OCI-LY7 (cell line): ENCODE measurements at regions of chr21 and their contacts with region 1.

Region 1: GRCh38 chr21:32764186-32764585 is 7.4 kb downstream of the PAXBP1 start:
- DNase-seq: peak; percentile 13
- H3K4me3 ChIP-seq: no peak overlapping the region
- H3K27ac ChIP-seq: no peak overlapping the region
- H3K4me1 ChIP-seq: peaks cover 18% of the 10 kb centered on the region
- CTCF ChIP-seq: no peak

Region 2: DNA sequence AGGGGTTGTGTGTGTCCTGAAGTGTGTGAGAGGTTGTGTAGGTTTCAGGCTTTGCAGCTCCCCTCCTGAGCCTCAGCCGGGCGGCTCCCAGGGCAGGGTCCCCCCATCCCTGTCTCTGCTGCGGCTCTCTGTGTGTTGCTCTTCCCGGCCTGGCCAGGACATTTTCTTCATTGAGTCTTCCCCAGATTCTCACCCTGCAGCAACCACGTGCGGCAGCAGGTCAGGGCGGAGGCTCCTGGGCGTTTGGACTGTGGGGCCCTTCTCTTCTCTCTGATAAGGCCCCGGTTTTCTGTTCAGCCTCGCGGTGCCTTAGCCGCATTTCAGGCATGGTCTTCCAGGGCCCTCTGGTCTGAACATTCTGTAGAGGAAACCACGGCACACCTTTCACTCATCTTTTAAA is 177.1 kb before region 1 on chr21:
- CTCF ChIA-PET with region 1: no interaction called
- POLR2A ChIA-PET with region 1: no interaction called
- intact Hi-C with region 1: no loop called
- DNase-seq: no peak
- H3K4me3 ChIP-seq: no peak overlapping the region
- H3K27ac ChIP-seq: no peak overlapping the region
- H3K4me1 ChIP-seq: no peaks in the 10 kb centered on the region
- CTCF ChIP-seq: no peak

Region 3: DNA sequence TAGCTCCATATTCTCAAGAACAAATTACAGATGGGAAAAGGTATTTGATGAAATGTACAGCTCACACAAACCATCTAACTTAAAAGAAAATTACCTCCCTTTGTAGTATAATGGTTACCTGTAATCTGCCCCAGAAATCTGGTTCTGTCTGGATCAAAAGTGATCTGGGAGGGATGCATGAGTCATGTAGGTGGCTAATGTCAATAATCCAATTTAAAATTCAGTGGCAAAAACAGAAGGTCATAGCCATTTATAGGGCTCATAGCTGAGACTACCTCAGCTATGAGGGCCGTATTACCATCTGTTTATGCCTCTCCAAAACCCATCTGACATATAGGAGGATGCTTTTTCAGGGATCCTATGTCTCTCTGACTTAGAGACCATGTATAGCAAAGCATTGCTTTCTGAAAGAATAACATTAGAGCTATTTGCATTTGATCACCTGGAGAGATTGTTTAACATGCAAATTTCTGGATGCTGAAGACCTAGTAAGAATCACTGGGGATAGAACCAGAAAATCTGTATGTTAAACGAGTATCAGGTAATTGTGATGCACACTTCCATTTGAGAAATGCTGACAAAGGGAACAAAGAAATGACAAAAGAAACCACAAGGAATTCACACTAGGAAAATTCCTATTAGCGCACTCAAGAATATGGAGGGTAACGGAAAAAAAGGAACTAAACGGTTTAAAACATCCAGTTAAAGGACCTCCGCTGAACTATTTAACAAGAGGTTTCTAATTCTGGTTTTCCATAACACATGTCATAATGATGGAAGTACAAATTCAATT is 10.2 kb before region 1 on chr21:
- CTCF ChIA-PET with region 1: no interaction called
- POLR2A ChIA-PET with region 1: interaction called, 13 read pairs
- intact Hi-C with region 1: no loop called
- DNase-seq: no peak
- H3K4me3 ChIP-seq: no peak overlapping the region
- H3K27ac ChIP-seq: no peak overlapping the region
- H3K4me1 ChIP-seq: no peaks in the 10 kb centered on the region
- CTCF ChIP-seq: no peak

Region 4: DNA sequence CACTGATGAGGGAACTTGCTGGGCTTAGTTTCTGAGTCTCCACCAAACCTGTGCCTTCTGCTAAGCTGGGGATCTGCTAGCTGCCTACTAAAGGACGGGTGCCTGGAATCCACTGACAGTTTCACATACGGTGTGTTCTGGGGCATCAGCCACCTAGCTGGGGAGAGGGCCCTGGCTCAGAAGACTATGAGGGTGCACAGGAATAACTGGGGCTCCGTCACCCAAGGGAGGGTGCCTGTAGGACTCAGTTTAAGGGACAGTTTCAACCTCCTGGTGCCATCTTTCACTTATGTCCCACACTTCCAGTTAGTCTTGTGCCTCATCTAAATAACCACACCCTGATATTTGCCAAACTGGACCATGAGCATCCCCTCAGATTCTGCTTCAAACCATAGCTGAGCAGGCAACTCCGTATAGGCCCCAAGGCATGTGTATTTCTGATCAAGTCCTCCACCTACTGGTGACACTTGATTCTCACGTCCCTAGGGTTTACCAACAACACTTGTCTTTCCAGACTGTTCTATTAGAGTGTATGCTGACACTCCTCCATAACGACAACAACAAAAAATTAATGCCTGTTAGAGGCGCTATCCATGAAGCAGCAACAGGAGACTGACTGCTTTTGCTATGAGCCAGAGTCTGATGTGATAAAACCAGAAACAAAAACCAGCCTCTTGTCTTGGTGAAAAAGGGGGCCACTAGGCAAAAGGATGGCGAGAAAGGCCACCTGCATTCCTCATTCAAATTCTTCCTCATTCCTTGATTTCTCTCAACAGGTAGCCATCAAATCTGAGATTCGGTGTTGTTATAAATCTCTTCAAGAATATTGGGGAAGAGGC is 62.4 kb after region 1 on chr21:
- CTCF ChIA-PET with region 1: no interaction called
- POLR2A ChIA-PET with region 1: no interaction called
- intact Hi-C with region 1: no loop called
- DNase-seq: peak; percentile 45
- H3K4me3 ChIP-seq: no peak overlapping the region
- H3K27ac ChIP-seq: no peak overlapping the region
- H3K4me1 ChIP-seq: no peaks in the 10 kb centered on the region
- CTCF ChIP-seq: peak; percentile 68

Region 5: DNA sequence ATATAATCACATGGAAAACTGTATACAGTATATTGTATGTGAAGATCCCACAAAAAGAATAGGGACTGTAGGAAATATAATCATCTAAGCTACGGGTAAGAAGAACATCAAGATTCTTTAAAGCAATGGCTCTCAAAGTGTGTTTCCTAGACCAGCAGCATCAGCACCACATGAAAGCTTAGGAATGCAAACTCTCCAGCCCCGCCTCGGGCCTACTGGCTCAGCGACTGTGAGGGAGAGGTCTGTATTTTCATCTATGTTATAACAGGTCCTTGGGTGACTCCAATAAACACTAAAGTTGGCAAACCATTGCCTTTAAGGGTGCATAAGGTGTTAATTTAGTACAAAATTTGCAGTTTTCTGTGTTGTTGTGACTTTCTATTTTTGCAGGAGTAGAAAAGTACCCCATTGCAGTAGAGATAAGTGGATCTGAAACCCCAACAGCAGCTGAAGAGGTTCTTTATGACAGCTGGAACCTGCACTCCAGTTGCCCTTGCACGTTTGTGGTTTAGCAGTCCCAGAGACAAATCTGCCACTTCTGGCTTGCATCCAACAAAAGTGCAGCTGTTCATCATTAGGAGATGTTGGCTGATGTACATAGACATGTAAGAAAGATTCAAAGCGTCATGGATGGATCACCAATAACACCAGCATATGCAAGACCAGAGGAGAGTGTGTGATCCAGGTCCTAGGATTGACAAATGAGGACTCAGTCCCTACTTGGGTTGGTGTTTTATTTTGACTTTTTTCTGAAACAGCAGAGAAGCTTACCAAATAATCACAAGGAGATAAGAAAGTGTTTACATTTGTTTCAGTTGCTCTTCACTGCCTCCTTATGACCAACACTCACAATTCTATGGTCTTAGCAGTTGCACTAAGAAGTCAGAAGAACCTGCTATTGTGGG is 544.7 kb after region 1 on chr21:
- CTCF ChIA-PET with region 1: no interaction called
- POLR2A ChIA-PET with region 1: no interaction called
- intact Hi-C with region 1: no loop called
- DNase-seq: peak; percentile 100
- H3K4me3 ChIP-seq: peak overlapping the region; percentile 42
- H3K27ac ChIP-seq: peak overlapping the region; percentile 99
- H3K4me1 ChIP-seq: peaks cover 100% of the 10 kb centered on the region
- CTCF ChIP-seq: peak; percentile 80